GM10248 (cell line): ENCODE measurements at regions of chr15 and their contacts with region 1.

Region 1: DNA sequence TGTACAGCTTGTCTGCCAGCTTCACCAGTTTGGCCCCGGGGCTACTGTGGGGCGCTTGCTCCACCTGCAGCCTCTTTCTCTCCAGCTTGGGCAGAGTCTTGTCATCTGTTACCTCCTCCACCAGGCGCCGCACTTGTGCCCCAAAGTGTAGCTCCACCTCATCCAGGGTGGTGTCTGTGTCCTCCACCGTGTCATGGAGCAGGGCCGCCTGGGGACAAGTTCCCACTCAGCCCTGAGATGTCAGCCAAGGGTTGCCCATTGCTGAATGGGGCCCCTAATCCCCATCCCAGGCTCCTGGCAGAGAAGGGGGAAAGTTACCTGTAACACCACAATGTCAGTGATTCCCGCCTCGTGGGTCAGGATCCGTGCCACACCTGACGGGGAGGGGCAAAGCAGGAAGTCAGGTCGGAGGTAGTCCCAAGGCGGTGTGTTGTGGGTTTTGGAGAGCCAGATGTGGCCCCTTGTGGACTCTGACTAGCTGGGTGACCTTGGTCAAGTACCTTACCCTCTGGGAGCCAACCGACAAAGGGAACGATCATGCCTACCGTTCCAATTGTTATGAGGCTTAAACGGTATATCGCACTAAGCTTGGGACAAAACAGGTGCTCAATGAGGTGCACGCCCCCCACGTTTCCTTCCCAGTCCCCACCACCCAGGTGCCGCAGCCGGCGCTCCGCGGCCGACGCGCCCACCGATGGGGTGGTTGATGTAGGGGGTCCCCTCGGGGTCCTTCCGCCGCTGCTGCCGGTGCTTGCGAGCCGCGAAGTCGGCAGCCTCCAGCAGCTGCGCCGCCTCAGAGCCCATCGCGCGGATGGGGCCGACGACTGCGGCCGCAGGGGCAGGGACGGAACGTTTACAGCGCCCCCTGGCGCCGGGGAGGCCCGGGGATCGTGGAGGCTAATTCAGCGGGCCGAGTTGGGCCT is at the start of gene HDDC3:
- DNase-seq: peak; percentile 90
- CTCF ChIP-seq: peak; percentile 98

Region 2: GRCh38 chr15:90306560-90306959 is 625.4 kb before region 1 on chr15:
- CTCF ChIA-PET with region 1: interaction called, 10 read pairs
- POLR2A ChIA-PET with region 1: no interaction called
- DNase-seq: peak; percentile 63
- CTCF ChIP-seq: peak; percentile 19

Region 3: DNA sequence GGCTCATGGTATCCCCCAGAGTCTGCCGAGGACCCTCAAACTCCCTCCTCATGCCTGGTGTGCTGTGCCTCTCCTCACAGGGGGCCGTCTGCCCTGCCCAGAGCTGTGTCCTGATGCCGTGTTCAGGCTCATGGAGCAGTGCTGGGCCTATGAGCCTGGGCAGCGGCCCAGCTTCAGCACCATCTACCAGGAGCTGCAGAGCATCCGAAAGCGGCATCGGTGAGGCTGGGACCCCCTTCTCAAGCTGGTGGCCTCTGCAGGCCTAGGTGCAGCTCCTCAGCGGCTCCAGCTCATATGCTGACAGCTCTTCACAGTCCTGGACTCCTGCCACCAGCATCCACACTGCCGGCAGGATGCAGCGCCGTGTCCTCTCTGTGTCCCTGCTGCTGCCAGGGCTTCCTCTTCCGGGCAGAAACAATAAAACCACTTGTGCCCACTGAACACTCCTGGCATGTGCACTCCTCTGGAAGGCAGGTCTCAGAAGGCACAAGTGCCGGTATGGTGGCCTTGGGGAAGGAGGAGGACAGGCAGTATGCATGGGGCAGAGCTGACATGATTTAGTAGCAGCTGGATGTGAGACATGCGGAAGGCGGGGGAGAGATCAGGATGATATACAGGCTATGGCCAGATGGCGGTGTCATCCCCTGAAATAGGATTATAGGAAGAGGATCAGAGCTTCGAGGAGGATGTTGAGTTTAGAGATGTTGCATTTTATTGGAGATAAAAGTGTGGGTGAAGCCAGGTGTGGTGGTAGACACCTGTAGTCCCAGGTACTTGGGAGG is 36.5 kb before region 1 on chr15:
- CTCF ChIA-PET with region 1: interaction called, 211 read pairs
- POLR2A ChIA-PET with region 1: interaction called, 7 read pairs
- DNase-seq: no peak
- CTCF ChIP-seq: no peak

Region 4: GRCh38 chr15:90954712-90955671 is 23.0 kb after region 1 on chr15 and contains the start of gene RCCD1:
- CTCF ChIA-PET with region 1: interaction called, 447 read pairs
- POLR2A ChIA-PET with region 1: interaction called, 8 read pairs
- DNase-seq: peak; percentile 99
- CTCF ChIP-seq: no peak

Region 5: DNA sequence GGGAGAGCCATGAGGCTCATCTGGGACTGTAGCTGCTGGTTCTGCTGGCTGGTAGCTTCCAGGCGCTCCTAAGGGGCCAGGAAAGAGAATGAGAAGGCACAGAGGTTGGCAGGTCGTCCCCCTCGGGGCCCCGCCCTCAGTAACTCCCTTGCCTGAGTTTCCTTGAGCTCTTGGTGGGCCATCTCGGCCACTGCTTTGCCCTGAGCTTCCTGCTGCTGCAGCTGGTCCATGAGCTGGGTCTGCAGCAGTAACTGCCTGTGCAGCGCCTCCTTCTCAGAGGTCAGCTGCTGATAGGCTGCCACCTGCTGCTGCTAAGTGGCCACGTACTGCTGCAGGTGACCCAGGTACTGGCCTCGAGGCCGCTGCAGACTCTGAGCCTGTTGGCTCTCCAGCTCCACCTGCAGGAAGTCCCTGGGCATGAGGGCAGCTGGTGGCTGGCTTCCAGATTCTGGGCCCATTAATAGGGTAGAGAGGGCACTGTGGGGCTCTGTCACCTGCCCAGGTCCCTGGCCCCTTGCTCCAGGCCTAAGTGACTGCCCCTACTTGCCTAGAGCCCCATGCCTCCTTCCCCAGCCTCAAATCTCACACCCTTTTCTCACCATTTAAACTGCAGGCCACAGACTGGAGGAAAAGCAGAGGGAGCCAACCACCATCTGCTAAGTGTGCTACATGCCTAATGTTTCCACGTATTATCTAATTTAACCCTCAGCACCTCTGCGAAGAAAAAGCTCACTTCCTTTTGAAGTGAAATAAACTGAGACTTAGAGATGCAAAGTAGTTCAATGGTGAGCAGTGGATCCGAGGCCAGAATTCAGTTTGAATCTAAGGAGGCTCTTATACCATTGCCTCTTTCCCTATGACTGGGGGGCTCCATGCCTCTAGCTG is 101.2 kb after region 1 on chr15:
- CTCF ChIA-PET with region 1: interaction called, 12 read pairs
- POLR2A ChIA-PET with region 1: no interaction called
- DNase-seq: peak; percentile 59
- CTCF ChIP-seq: peak; percentile 86

Region 6: DNA sequence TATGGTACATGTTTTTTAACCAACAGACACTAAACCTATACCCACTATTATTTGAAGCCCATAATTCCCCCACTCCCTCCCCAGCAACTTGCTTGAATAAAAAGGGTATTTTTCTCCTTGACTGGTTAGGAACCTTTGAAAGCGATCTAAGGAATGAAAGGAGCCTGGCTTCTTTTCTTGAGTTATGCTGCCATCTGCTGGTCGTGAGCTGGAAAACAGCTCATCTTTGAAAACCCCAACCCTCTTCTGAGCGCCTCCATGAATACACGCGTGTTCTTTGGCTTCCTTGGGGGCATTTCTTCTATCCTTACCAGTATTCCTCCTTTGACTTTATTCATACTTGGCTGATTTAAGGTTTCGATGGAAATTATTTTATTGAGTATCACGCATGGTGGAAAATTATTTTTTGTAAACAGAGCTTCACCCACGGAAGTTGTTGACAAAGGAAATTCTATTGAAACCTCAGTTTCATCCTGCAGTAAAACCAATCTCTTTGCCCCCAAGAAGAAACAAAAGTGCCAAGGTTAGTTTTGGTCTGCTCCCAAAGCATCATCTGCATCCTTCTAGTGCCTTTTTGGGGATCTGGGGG is 339.7 kb after region 1 on chr15:
- CTCF ChIA-PET with region 1: interaction called, 20 read pairs
- POLR2A ChIA-PET with region 1: no interaction called
- DNase-seq: peak; percentile 54
- CTCF ChIP-seq: peak; percentile 84